OCI-LY7 (cell line): ENCODE measurements at regions of chr2 and their contacts with region 1.

Region 1: GRCh38 chr2:98835831-98836385 is 100.1 kb downstream of the CRACDL start:
- DNase-seq: no peak
- H3K4me3 ChIP-seq: no peak overlapping the region
- H3K27ac ChIP-seq: no peak overlapping the region
- H3K4me1 ChIP-seq: peaks cover 13% of the 10 kb centered on the region
- CTCF ChIP-seq: no peak

Region 2: GRCh38 chr2:98412751-98413458 is 423.0 kb before region 1 on chr2:
- CTCF ChIA-PET with region 1: no interaction called
- POLR2A ChIA-PET with region 1: no interaction called
- intact Hi-C with region 1: loop called (anchors 10 kb)
- DNase-seq: peak; percentile 71
- H3K4me3 ChIP-seq: no peak overlapping the region
- H3K27ac ChIP-seq: no peak overlapping the region
- H3K4me1 ChIP-seq: no peaks in the 10 kb centered on the region
- CTCF ChIP-seq: peak; percentile 88

Region 3: GRCh38 chr2:98649135-98649991 is 186.5 kb before region 1 on chr2:
- CTCF ChIA-PET with region 1: no interaction called
- POLR2A ChIA-PET with region 1: interaction called, 5 read pairs
- intact Hi-C with region 1: loop called (anchors 1 kb)
- DNase-seq: peak; percentile 84
- H3K4me3 ChIP-seq: no peak overlapping the region
- H3K27ac ChIP-seq: no peak overlapping the region
- H3K4me1 ChIP-seq: peaks cover 10% of the 10 kb centered on the region
- CTCF ChIP-seq: peak; percentile 99

Region 4: DNA sequence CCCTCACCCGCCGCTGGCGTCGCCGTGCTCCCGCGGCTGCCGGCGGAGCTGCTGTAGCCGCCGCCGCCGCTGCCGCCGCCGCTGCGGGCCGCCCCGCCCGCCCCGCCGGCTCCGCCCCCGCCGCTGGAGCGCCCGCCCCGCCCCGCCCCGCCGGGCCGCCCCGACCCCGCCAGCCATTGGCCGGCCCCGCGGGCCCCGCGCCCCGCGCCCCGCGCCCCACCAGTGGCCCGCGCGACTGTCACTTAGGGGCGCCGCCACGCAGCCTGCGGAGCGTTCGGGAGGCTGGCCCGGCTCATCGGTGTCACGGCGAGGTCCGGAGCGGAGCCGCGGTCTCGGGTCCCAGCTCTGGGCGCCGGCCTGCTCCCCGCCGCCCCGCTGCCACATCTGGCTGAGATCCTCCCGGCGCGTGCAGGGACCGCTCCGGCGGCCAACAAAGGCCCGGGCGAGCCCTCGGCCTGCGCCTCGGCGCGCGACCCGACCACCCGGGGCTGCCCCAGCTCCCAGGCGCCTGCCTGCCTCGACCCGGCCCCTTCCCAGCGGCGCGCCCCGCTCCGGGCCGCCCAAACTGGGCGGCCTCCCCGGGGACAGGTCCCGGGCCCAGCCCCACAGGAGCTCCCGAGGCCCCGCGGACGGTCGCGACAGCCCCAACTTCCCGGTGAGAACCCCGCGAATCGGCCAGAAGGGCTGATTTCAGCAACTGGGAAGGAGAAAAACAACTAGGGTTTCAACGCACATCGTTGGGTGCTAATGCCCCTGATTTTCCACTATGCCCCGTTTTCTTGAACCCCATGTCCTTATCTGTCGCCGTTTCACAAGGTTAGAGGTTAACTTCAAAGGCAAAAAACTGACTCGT is 104.6 kb before region 1 on chr2 and contains the start of gene MGAT4A:
- CTCF ChIA-PET with region 1: no interaction called
- POLR2A ChIA-PET with region 1: no interaction called
- intact Hi-C with region 1: loop called (anchors 5 kb)
- DNase-seq: peak; percentile 68
- H3K4me3 ChIP-seq: peak within 1 kb of the TSS; percentile 80
- H3K27ac ChIP-seq: no peak within 1 kb of the TSS
- H3K4me1 ChIP-seq: peaks cover 50% of the 10 kb centered on the region
- CTCF ChIP-seq: no peak
- total RNA-seq, gene MGAT4A: 7.7 and 10.1 TPM in 2 replicates

Region 5: DNA sequence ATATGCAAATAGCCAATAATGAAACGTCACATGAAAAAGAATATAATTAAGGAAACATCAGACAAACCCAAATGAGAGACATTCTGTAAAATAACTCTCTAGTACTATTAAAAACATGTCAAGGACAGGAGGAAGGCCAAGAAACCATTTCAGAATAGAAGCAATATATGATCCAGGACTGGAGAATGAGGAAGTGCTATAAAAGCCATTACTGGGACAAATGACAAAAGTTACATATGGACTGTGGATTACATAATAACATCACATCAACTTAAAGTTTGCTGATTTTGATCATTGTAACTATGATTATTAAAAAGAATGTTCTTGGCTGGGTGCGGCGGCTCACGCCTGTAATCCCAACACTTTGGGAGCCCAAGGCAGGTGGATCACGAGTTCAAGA is 18.8 kb after region 1 on chr2:
- CTCF ChIA-PET with region 1: no interaction called
- POLR2A ChIA-PET with region 1: no interaction called
- intact Hi-C with region 1: no loop called
- DNase-seq: no peak
- H3K4me3 ChIP-seq: no peak overlapping the region
- H3K27ac ChIP-seq: no peak overlapping the region
- H3K4me1 ChIP-seq: no peaks in the 10 kb centered on the region
- CTCF ChIP-seq: no peak

Region 6: GRCh38 chr2:99066075-99066958 is 230.4 kb after region 1 on chr2:
- CTCF ChIA-PET with region 1: no interaction called
- POLR2A ChIA-PET with region 1: no interaction called
- intact Hi-C with region 1: loop called (anchors 1 kb)
- DNase-seq: peak; percentile 59
- H3K4me3 ChIP-seq: no peak overlapping the region
- H3K27ac ChIP-seq: no peak overlapping the region
- H3K4me1 ChIP-seq: peaks cover 9% of the 10 kb centered on the region
- CTCF ChIP-seq: peak; percentile 84